AG04450 (cell line): ENCODE measurements at regions of chr7 and their contacts with region 1.

Region 1: GRCh38 chr7:14691597-14692203 is 210.9 kb downstream of the DGKB start:
- DNase-seq: peak; percentile 4
- H3K4me3 ChIP-seq: no peak overlapping the region
- H3K27ac ChIP-seq: no peak overlapping the region
- H3K27me3 ChIP-seq: no peaks in the 10 kb centered on the region
- CTCF ChIP-seq: peak; percentile 89

Region 2: DNA sequence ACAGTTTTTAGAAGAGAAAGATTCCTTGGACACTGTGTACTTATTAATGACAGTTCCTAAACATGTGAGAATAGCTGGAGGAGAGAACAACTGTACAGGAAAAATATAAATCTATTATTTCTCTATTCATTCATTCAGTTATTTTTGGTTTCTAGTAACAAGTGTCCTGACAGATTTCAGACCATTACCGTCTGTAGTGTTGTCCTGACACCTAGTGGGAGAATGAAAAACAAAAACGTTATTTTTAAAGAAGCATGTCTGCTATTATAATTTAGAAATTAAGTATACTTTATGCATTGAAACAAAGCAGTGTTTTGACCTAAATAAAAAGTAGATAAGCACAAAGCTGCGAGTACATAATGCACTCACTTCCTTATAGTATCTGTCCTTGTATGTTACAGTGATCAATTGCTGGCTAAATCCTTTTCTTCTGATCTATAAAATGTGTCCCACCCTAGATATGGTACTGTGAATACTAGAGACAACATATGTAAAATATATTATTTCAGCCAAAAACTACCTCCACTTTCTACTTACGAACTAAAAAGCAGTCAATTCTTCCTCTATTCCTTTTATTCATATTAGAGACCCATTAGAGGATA is 1428.7 kb before region 1 on chr7:
- CTCF ChIA-PET with region 1: interaction called, 13 read pairs
- POLR2A ChIA-PET with region 1: no interaction called
- DNase-seq: peak; percentile 24
- H3K4me3 ChIP-seq: no peak overlapping the region
- H3K27ac ChIP-seq: no peak overlapping the region
- H3K27me3 ChIP-seq: no peaks in the 10 kb centered on the region
- CTCF ChIP-seq: peak; percentile 61

Region 3: DNA sequence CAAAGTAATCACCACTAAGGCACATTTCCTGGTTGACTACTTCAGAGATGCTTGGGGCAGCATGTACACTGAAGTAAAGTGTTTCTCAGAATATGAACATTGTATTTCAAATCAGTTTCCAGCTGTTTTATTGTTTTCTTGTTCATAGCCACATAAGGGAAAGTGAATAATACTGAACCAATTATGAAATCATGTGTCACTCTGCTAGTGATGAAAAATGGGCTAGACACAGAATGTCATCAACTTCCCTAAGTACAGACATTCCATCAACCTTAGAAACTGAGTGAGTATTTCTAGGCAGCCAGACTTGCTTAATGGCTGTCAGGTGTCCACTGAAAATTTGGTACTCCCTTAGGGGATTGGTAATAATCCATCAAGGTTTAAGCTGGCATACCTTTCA is 1400.7 kb before region 1 on chr7:
- CTCF ChIA-PET with region 1: interaction called, 20 read pairs
- POLR2A ChIA-PET with region 1: no interaction called
- DNase-seq: no peak
- H3K4me3 ChIP-seq: no peak overlapping the region
- H3K27ac ChIP-seq: no peak overlapping the region
- H3K27me3 ChIP-seq: no peaks in the 10 kb centered on the region
- CTCF ChIP-seq: no peak

Region 4: DNA sequence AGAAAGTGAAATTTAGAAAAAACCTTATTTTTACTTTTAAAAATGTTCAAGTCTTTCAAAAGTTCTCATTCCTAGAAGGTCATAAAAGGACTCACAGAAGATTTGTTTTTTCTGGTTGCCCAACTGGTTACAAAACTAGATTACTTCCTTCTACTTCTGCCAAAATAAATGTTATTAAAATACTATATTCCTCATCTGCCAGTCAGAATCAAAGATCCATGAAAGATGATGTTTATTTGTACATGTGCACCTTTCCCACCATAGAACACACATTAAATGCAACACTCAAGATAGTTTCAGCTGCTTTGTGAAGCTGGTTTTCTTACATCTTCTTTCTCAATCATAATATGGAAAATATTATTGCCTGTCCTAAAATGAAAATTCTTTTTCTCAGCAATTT is 1167.6 kb before region 1 on chr7:
- CTCF ChIA-PET with region 1: interaction called, 22 read pairs
- POLR2A ChIA-PET with region 1: no interaction called
- DNase-seq: no peak
- H3K4me3 ChIP-seq: no peak overlapping the region
- H3K27ac ChIP-seq: no peak overlapping the region
- H3K27me3 ChIP-seq: no peaks in the 10 kb centered on the region
- CTCF ChIP-seq: no peak

Region 5: DNA sequence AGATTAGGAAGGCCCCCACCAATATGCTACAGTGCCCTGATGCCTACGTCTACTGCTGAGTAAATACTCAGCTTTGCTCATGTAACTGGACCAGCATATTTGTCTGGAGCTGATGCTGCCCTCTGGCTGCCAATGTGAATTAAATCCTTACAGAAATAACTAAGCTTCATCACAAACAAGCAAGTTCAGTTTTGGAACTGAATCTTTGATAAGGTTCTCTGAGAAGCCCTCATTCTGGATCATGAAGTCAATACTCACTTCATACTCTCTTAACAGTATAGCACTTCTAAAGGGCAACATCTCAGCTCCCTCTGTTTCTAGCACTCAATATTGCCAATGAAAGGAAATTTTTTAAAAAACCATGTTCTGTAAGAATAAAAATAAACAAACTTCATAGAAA is 948.9 kb before region 1 on chr7:
- CTCF ChIA-PET with region 1: interaction called, 11 read pairs
- POLR2A ChIA-PET with region 1: no interaction called
- DNase-seq: peak; percentile 20
- H3K4me3 ChIP-seq: no peak overlapping the region
- H3K27ac ChIP-seq: no peak overlapping the region
- H3K27me3 ChIP-seq: no peaks in the 10 kb centered on the region
- CTCF ChIP-seq: peak; percentile 55

Region 6: GRCh38 chr7:13990984-13991790 is 700.5 kb before region 1 on chr7:
- CTCF ChIA-PET with region 1: interaction called, 11 read pairs
- POLR2A ChIA-PET with region 1: no interaction called
- DNase-seq: peak; percentile 95
- H3K4me3 ChIP-seq: peak overlapping the region; percentile 81
- H3K27ac ChIP-seq: peak overlapping the region; percentile 94
- H3K27me3 ChIP-seq: no peaks in the 10 kb centered on the region
- CTCF ChIP-seq: no peak

Region 7: DNA sequence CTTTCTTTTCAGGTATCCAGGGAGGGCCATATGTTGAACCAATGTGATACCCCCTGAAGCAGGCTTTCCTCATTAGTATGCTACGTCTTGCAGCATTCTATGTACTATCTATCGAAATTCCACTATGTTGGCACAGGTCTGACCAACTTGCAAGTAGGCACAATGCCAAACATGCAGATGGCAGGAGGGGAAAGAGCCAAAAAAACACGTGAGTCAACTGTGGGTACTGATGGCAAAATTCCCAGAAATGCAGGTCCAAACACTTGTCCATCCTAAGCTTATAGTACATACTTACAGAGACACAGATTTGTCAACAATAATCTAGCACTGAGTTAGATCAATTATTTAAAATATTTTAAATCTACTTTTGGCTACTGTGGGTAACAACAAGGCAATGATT is 184.1 kb before region 1 on chr7:
- CTCF ChIA-PET with region 1: no interaction called
- POLR2A ChIA-PET with region 1: no interaction called
- DNase-seq: no peak
- H3K4me3 ChIP-seq: no peak overlapping the region
- H3K27ac ChIP-seq: no peak overlapping the region
- H3K27me3 ChIP-seq: no peaks in the 10 kb centered on the region
- CTCF ChIP-seq: no peak

Region 8: DNA sequence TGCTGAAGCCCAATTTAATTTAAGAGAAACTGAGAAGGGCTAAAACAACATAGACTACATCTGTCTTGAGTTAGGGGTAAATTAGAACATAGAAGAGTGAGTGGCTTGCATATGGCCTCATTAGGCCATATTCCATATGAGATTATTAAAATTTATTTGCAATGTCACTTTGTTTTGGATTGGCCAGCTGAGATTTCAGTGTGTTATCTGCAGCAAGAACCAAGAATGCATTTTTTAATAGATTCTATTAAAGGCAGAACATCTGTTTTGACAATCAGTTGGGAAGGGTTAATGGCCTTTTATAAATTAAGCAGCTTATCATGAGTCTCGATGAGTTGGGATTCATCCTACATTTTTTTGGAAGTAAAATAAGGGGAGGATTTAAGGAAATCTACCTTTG is 25.4 kb before region 1 on chr7:
- CTCF ChIA-PET with region 1: interaction called, 10 read pairs
- POLR2A ChIA-PET with region 1: no interaction called
- DNase-seq: no peak
- H3K4me3 ChIP-seq: no peak overlapping the region
- H3K27ac ChIP-seq: no peak overlapping the region
- H3K27me3 ChIP-seq: no peaks in the 10 kb centered on the region
- CTCF ChIP-seq: no peak

Region 9: GRCh38 chr7:15041226-15041625 is 349.5 kb after region 1 on chr7:
- CTCF ChIA-PET with region 1: no interaction called
- POLR2A ChIA-PET with region 1: no interaction called
- DNase-seq: peak; percentile 1
- H3K4me3 ChIP-seq: no peak overlapping the region
- H3K27ac ChIP-seq: no peak overlapping the region
- H3K27me3 ChIP-seq: no peaks in the 10 kb centered on the region
- CTCF ChIP-seq: no peak